CD8-positive, alpha-beta T cell (primary cell): ENCODE measurements at regions of chr4 and their contacts with region 1.

Region 1: GRCh38 chr4:145154573-145154972 is 25.8 kb downstream of the OTUD4 start:
- DNase-seq: peak in 2 of 9 experiments; percentile 27 to 46
- ATAC-seq: no peak
- H3K4me3 ChIP-seq: no peak overlapping the region
- H3K4me3 Mint-ChIP-seq: no peak overlapping the region
- H3K27ac ChIP-seq: no peak overlapping the region
- H3K27ac Mint-ChIP-seq: no peak overlapping the region
- H3K4me1 ChIP-seq: no peaks in the 10 kb centered on the region
- H3K4me1 Mint-ChIP-seq: peaks cover 8% of the 10 kb centered on the region
- H3K27me3 ChIP-seq: no peaks in the 10 kb centered on the region
- H3K27me3 Mint-ChIP-seq: no peaks in the 10 kb centered on the region
- CTCF ChIP-seq: no peak

Region 2: GRCh38 chr4:145557720-145558119 is 403.1 kb after region 1 on chr4:
- CTCF ChIA-PET with region 1: no interaction called
- POLR2A ChIA-PET with region 1: no interaction called
- intact Hi-C with region 1: loop called (anchors 5 kb)
- DNase-seq: peak in 7 of 9 experiments; percentile 5 to 63 (median 38)
- ATAC-seq: peak; percentile 59
- H3K4me3 ChIP-seq: no peak overlapping the region
- H3K4me3 Mint-ChIP-seq: no peak overlapping the region
- H3K27ac ChIP-seq: no peak overlapping the region
- H3K27ac Mint-ChIP-seq: no peak overlapping the region
- H3K4me1 ChIP-seq: no peaks in the 10 kb centered on the region
- H3K4me1 Mint-ChIP-seq: no peaks in the 10 kb centered on the region
- H3K27me3 ChIP-seq: no peaks in the 10 kb centered on the region
- H3K27me3 Mint-ChIP-seq: peaks cover 5% of the 10 kb centered on the region
- CTCF ChIP-seq: peak; percentile 52

Region 3: DNA sequence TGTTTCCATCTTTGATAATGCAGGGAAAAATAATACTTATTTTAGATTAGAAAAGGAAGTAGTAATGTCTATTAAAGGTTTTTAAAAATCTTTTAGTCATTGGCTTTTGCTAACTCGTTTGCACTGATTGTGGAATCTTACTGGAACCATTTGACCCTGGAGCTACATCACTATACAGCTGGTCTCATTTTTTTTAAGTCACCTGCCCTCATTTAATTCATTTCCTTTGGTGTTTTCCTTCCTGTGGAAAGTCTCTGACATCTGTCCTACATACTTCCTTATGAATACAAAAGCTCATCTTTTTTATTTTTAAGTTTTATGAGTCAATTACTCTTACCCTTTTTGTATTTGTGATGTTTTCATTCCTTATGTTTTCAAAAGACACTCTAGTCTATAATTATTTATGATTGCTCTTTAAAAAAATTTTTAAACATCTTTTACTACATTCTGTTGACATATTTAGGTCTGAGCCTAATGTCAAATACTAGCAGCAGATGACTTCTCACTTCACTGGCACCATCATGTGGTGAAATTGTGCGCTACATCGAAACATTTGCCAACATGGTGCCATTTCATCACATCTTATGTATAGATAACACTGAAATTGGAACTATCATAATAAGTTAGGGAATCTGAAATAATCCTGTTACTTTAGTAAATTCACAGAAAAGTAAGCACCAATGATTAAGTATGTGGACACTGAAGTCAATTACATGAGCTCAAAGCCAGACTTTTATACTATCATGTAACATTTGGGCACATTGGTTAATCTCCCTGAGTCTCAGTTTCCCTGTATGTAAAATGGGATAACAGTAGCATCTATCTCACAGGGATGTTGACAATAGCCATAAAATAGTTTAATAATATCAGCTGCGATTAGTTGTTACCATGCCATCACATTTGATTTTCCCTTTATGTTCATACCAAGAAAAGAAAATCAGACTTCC is 455.2 kb after region 1 on chr4:
- CTCF ChIA-PET with region 1: interaction called, 3 read pairs
- POLR2A ChIA-PET with region 1: no interaction called
- intact Hi-C with region 1: loop called (anchors 1 to 10 kb)
- DNase-seq: peak; percentile 32 to 72 (median 53)
- ATAC-seq: peak; percentile 81
- H3K4me3 ChIP-seq: no peak overlapping the region
- H3K4me3 Mint-ChIP-seq: no peak overlapping the region
- H3K27ac ChIP-seq: no peak overlapping the region
- H3K27ac Mint-ChIP-seq: no peak overlapping the region
- H3K4me1 ChIP-seq: no peaks in the 10 kb centered on the region
- H3K4me1 Mint-ChIP-seq: no peaks in the 10 kb centered on the region
- H3K27me3 ChIP-seq: no peaks in the 10 kb centered on the region
- H3K27me3 Mint-ChIP-seq: peaks cover 9% of the 10 kb centered on the region
- CTCF ChIP-seq: peak; percentile 54

Region 4: GRCh38 chr4:145644699-145645098 is 490.1 kb after region 1 on chr4:
- CTCF ChIA-PET with region 1: no interaction called
- POLR2A ChIA-PET with region 1: no interaction called
- intact Hi-C with region 1: no loop called
- DNase-seq: no peak
- ATAC-seq: no peak
- H3K4me3 ChIP-seq: no peak overlapping the region
- H3K4me3 Mint-ChIP-seq: no peak overlapping the region
- H3K27ac ChIP-seq: no peak overlapping the region
- H3K27ac Mint-ChIP-seq: no peak overlapping the region
- H3K4me1 ChIP-seq: no peaks in the 10 kb centered on the region
- H3K4me1 Mint-ChIP-seq: no peaks in the 10 kb centered on the region
- H3K27me3 ChIP-seq: no peaks in the 10 kb centered on the region
- H3K27me3 Mint-ChIP-seq: no peaks in the 10 kb centered on the region
- CTCF ChIP-seq: no peak